MCF 10A (cell line): ENCODE measurements at regions of chr1 and their contacts with region 1.

Region 1: GRCh38 chr1:237857455-237857854 is 33.3 kb downstream of the ZP4 start:
- DNase-seq: no peak
- H3K4me3 Mint-ChIP-seq: no peak overlapping the region
- H3K27ac Mint-ChIP-seq: no peak overlapping the region
- H3K4me1 Mint-ChIP-seq: no peaks in the 10 kb centered on the region
- H3K27me3 Mint-ChIP-seq: no peaks in the 10 kb centered on the region
- CTCF ChIP-seq: no peak

Region 2: DNA sequence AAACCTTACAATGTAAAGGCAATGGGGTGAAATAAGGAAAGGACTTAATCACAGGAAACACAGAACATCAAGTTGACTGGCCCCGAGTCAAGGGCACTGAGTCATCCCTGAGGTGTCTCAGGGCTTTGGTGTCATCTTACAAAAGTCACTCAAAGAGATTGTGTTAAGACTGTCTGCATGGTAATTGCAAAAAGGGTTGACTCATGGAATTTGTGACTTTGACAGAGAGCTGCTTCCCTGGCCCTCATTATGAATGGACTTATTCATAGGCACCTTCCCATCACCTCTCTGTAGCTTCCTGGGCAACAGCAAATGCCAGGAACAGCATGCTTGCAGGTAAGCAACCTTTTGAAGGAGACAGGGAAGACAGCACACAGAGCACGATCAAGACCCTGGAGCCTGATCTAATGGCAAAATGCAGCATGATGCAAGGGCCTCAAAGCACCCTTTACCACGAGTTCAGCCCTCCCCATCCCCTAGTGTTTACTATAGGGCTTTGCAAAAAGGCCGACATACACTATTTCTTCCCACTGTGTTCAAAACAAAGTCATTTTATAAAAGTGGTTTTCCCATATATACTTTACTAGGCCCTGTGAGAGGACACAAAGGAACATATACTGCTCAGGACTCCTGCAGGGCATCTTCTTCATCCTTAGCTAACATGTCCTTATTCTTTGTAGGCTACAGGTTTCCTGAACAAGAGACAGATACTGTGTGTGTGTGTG is 16.2 kb after region 1 on chr1:
- CTCF ChIA-PET with region 1: interaction called, 139 read pairs
- POLR2A ChIA-PET with region 1: interaction called, 8 read pairs
- intact Hi-C with region 1: no loop called
- DNase-seq: peak; percentile 100
- H3K4me3 Mint-ChIP-seq: no peak overlapping the region
- H3K27ac Mint-ChIP-seq: peak overlapping the region; percentile 17
- H3K4me1 Mint-ChIP-seq: peaks cover 31% of the 10 kb centered on the region
- H3K27me3 Mint-ChIP-seq: no peaks in the 10 kb centered on the region
- CTCF ChIP-seq: no peak

Region 3: DNA sequence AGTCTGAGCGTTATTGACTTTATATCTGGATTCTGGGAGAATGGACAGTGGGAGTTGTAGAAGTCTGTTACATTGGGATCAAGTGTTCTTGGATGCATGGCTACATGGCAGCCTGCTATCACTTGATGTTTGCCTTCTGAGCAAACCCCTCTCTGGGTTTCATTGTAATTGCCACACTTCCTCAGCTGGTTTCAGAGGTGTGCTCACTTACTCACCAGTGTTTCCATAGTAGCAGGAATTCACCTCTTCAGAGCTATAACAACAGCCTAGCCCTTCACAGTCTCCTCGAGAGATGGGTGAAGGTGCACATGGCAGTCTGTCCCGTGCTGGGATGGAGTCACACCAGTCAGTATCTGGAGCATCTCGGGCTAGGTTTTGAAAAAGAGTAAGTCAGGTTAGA is 30.7 kb after region 1 on chr1:
- CTCF ChIA-PET with region 1: no interaction called
- POLR2A ChIA-PET with region 1: no interaction called
- intact Hi-C with region 1: no loop called
- DNase-seq: peak; percentile 38
- H3K4me3 Mint-ChIP-seq: no peak overlapping the region
- H3K27ac Mint-ChIP-seq: peak overlapping the region; percentile 11
- H3K4me1 Mint-ChIP-seq: peaks cover 8% of the 10 kb centered on the region
- H3K27me3 Mint-ChIP-seq: no peaks in the 10 kb centered on the region
- CTCF ChIP-seq: no peak

Region 4: DNA sequence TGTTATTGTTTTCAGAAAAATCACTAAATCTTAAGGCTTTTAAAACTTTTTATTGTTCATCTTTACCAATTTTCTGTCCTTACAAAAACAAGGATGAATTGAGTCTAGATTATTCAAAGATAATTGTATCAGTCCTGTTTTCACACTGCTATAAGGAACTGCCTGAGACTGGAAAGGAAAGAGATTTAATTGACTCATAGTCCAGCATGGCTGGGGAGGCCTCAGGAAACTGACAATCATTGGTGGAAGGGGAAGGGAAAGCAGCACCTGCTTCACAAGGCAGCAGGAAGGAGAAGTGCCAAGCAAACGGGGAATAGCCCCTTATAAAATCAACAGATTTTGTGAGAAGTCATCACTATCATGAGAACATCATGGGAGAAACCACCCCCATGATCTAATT is 488.9 kb after region 1 on chr1:
- CTCF ChIA-PET with region 1: no interaction called
- POLR2A ChIA-PET with region 1: no interaction called
- intact Hi-C with region 1: no loop called
- DNase-seq: no peak
- H3K4me3 Mint-ChIP-seq: no peak overlapping the region
- H3K27ac Mint-ChIP-seq: no peak overlapping the region
- H3K4me1 Mint-ChIP-seq: peaks cover 5% of the 10 kb centered on the region
- H3K27me3 Mint-ChIP-seq: no peaks in the 10 kb centered on the region
- CTCF ChIP-seq: no peak